ENCODE measurements at regions of chr1 and their contacts with region 1.

Region 1: DNA sequence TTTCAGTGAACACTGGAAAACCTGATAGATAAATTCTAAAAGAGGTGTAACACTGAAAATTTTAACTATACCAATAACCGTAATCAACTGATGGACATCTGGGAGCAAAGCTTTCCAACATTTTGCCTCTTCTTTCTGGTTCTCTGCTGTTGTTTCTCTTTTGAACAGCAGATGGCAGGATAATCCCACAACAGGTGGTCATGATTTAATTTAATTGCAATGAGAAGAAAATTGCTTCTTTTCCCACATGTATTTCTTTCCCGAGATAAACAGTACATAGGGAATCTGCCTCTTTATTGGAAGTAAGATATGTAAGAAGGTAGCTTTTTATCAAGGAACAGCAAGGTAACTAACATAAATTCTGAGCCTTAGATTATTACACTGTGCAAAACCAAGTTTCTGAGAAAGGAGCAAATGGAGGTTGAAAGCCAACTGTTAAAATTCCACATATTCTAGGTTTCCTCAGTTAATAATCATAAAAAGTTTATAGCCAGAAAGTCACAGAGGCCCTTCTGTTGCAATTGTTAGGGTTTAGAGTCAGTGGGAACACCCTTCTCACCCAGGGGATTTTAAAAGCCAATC is 72.9 kb downstream of the RPS6KA1 start:
- DNase-seq: no peak
- H3K4me3 ChIP-seq: no peak overlapping the region
- H3K27ac ChIP-seq: no peak overlapping the region
- H3K27me3 ChIP-seq: peaks cover 25% of the 10 kb centered on the region
- CTCF ChIP-seq: peak; percentile 85

Region 2: DNA sequence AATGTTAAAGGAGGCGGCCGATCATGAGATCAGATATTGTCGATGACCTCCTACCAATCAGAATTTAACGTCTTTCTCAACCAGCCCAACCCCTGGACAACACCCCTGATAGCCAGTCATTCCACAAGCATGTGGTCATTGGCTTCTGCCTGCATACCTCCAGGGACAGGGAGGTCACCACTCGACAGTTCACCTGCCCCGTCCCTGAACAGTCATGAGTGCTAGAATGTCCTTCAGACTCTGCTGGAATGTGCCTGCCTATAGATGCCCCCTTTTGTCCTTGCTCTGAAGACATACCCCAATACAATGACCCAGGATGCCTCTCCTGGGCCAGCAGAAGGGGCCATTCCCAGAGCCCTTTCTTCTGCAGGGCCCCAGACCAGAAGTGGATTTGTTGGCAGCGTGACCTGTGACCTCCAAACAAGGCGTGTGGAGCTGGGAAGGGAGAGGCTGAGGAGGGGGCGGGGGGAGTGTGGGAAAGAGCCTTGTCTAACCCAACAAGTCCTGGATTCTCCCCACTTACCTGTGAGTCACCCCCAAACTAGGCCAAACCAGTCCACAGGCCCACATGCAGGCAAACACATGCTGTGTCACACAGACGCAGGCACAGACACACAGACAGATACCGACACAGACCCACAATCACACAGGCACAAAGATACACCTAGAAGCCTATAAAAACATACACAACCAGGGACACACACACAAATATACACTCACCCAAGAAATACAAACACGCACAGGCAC is 250.7 kb before region 1 on chr1:
- CTCF ChIA-PET with region 1: no interaction called
- POLR2A ChIA-PET with region 1: no interaction called
- DNase-seq: no peak
- H3K4me3 ChIP-seq: no peak overlapping the region
- H3K27ac ChIP-seq: no peak overlapping the region
- H3K27me3 ChIP-seq: peaks cover 19% of the 10 kb centered on the region
- CTCF ChIP-seq: no peak

Region 3: DNA sequence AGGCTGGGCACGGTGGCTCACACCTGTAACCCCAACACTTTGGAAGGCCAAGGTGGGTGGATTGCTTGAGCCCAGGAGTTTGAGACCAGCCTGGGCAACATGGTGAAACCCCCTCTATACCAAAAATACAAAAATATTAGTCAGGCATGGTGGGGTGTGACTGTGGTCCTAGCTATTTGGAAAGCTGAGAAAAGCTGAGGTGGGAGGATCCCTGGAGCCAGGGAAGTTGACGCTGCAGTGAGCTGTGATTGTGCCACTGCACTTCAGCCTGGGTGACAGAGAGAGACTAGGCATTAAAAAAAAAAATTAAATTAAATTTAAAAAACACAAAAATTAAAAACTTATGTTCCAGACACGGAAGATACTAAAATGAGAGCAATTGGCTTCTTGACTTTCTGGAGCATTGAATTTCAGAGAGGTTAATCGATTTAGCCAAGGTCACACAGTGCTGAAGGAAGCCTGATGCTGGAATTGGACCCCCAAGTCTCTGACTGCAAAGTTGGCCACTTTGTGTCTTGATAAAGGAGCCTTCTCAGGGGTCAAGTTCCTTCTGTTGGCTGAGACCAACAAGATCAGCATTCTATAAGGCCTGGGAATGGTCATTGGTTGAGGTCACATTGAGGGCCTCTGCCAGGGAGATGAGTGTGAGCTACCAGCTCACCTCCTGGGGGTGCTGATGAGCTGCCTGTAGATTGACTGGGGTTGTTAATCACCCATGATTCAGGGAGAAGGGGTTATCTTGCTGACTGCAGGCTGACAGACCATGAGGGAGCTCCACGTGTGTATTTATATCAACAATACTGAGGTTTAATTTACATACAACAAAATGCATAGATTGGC is 18.6 kb before region 1 on chr1:
- CTCF ChIA-PET with region 1: interaction called, 12 read pairs
- POLR2A ChIA-PET with region 1: no interaction called
- DNase-seq: no peak
- H3K4me3 ChIP-seq: no peak overlapping the region
- H3K27ac ChIP-seq: no peak overlapping the region
- H3K27me3 ChIP-seq: no peaks in the 10 kb centered on the region
- CTCF ChIP-seq: no peak

Region 4: GRCh38 chr1:26697978-26698849 is 95.7 kb after region 1 on chr1:
- CTCF ChIA-PET with region 1: interaction called, 23 read pairs
- POLR2A ChIA-PET with region 1: no interaction called
- DNase-seq: peak; percentile 90
- H3K4me3 ChIP-seq: peak overlapping the region; percentile 79
- H3K27ac ChIP-seq: peak overlapping the region; percentile 78
- H3K27me3 ChIP-seq: no peaks in the 10 kb centered on the region
- CTCF ChIP-seq: no peak

Region 5: GRCh38 chr1:26771643-26772321 is 169.3 kb after region 1 on chr1:
- CTCF ChIA-PET with region 1: interaction called, 10 read pairs
- POLR2A ChIA-PET with region 1: interaction called, 5 read pairs
- DNase-seq: peak; percentile 93
- H3K4me3 ChIP-seq: no peak overlapping the region
- H3K27ac ChIP-seq: peak overlapping the region; percentile 97
- H3K27me3 ChIP-seq: no peaks in the 10 kb centered on the region
- CTCF ChIP-seq: no peak

Region 6: GRCh38 chr1:26799479-26800142 is 197.1 kb after region 1 on chr1:
- CTCF ChIA-PET with region 1: interaction called, 34 read pairs
- POLR2A ChIA-PET with region 1: no interaction called
- DNase-seq: no peak
- H3K4me3 ChIP-seq: peak overlapping the region; percentile 32; the same call in 1 of the 2 replicates
- H3K27ac ChIP-seq: peak overlapping the region; percentile 69
- H3K27me3 ChIP-seq: no peaks in the 10 kb centered on the region
- CTCF ChIP-seq: no peak

Region 7: DNA sequence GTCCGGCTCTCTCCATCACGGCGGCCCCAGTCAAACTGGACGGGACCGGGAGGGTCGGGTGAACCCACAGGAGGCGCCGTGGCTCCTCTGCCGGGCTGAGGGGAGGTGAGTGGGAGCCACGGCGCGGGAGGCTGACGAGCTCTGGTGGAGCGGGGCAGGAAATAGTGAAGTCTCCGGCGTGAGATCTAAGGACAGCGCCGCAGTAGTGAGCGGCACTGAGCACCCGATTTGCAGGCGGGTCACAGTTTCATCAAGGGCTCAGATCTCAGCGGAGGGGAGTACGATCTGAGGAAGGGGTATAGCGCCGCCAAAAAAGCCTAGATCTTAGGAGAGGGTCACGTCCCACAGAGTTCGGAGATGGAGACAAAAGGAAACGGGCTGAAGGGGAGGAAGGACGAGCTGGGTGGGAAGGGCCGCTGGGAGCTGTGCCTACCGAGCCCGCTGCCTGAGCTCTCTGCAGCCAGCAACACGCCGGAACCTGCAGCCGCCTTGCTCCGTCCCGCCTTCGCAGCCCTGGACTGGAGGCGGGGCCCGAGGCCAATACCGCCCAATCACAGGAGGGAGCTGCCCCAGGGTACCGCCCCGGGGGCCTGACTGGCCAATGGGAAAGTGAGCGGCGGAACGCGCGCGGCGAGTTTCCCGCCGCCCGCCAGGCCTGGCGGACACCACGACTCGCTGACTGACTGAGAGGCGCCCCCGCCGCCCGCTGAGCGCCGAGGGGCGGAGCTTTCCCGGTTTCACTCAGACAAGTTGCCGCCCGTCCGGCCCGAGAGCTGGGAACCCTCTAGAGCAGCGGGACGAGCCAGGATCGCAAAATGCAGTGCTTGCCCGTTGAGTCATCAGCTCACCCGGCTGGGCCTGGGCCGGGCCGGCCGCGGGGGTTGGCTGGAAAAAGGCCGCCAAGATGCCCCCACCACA is 262.4 kb after region 1 on chr1:
- CTCF ChIA-PET with region 1: interaction called, 16 read pairs
- POLR2A ChIA-PET with region 1: no interaction called
- DNase-seq: peak; percentile 96
- H3K4me3 ChIP-seq: peak overlapping the region; percentile 73
- H3K27ac ChIP-seq: peak overlapping the region; percentile 97
- H3K27me3 ChIP-seq: no peaks in the 10 kb centered on the region
- CTCF ChIP-seq: no peak